MCF 10A (cell line): ENCODE measurements at regions of chr3 and their contacts with region 1.

Region 1: DNA sequence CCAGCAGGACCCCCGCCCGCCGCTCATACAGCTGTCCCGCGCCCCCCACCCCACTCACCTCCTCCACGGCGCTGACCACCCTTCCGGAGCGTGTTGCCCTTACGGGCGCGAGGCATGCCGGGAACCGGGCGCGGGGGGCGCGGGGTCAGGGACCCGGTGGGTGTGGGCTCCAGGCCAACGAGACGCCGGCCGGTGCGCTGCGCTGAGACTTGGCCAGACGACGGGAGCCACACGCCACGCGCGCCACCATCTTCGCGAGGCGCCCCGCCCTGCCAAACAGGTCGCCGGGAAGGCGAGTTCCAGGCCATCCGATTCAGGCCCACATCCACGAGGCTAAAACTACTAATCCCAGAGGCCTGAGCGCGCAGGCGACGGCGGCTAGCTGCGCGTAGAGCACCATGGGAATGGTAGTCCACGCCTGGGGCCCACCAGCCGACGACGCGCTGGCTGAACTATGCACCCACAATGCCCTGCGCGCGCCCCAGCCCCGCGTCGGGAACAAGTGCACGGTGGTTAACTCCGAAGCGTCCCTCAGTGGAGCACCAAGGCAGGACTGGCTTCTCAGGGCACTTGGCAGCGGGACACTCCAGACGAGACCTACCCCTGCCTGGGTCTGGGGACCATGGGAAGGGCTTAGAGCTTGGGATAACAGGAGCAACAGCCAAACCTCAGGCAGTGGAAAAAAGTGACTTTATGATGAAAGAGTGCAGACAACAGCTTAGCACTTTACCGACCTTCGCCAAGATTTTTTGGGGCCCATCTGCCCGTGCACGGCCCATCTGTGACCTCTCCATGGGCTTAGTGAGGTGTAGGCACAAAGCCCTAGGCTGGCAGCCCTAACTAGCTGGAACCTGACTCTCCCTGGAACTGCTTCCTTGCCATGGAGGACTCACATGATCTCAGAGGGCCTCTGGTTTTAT is at the start of gene IFRD2:
- DNase-seq: peak; percentile 97
- H3K4me3 Mint-ChIP-seq: peak within 1 kb of the TSS; percentile 96
- H3K27ac Mint-ChIP-seq: peak within 1 kb of the TSS; percentile 93
- H3K4me1 Mint-ChIP-seq: peaks cover 14% of the 10 kb centered on the region
- H3K27me3 Mint-ChIP-seq: no peaks in the 10 kb centered on the region
- CTCF ChIP-seq: no peak
- total RNA-seq, gene IFRD2: 135 and 182 TPM in 2 replicates

Region 2: DNA sequence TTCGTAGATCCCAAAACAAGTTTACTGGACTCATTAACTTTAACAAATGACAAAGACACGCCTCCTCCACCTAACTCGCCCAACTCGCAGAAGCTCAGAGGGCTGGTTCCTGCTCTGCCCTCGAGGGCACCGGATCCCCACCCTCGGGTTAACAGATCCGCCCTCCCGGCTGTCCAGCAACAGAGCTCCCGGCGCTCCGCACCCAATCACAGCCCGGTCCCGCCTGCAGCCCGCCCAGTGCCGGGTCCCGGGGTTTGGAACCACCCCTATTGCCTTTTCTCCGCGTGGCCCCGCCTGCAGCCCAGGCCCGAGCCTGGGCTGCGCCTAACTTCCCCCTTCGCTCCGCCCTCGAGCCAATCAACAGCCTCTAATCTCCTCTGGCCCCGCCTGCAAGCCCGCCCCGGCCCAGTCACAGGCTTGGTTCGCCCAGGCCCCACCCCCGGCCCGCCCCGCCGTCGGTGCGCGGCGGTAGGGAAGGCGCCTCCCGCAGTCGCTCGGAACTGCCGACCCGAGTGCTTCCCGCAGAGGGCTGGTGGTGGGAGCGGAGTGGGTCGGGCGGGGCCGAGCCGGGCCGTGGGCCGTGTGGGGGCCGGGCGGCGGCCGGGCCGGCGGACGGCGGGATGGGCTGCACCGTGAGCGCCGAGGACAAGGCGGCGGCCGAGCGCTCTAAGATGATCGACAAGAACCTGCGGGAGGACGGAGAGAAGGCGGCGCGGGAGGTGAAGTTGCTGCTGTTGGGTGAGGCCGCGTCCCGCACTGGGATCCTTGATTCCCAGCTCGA is 56.5 kb before region 1 on chr3 and contains the start of gene GNAI2:
- CTCF ChIA-PET with region 1: no interaction called
- POLR2A ChIA-PET with region 1: interaction called, 22 read pairs
- intact Hi-C with region 1: no loop called
- DNase-seq: peak; percentile 99
- H3K4me3 Mint-ChIP-seq: peak within 1 kb of the TSS; percentile 98
- H3K27ac Mint-ChIP-seq: peak within 1 kb of the TSS; percentile 83
- H3K4me1 Mint-ChIP-seq: peaks cover 46% of the 10 kb centered on the region
- H3K27me3 Mint-ChIP-seq: no peaks in the 10 kb centered on the region
- CTCF ChIP-seq: no peak
- total RNA-seq, gene GNAI2: 122 and 123 TPM in 2 replicates

Region 3: DNA sequence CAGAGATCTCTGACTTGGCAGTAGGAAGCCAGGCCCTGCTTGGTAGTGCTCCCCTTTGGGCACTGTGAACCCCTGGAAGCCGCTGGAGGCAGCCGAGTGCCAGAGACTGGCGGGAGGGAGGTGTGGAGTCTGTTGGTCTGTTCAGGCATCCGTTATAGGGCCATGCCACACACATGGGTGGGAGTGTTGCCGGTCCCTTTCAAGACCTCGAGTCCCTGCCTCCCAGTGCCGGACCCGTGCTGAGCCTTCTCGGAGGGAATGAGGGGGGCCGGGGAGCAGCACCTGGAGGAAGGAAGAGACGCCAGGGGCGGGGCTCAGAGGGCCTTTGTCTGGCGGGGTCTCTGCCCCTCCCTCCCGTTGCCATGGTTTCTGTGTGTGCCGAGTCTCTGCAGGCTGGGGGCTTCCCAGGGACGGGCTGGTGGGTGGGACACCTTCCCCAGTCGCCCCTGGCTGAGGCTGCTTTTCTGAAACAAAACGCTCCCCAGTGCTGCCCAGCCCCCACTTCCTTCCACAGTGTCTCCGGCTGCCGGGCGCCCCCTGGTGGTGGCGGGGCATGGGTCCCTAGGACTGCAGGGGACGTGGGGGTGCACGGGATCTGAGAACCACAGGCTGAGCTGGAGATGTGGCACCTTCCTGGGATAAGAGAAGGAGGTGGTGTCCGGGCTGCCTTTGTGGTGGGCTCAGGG is 46.4 kb before region 1 on chr3:
- CTCF ChIA-PET with region 1: interaction called, 4 read pairs
- POLR2A ChIA-PET with region 1: interaction called, 10 read pairs
- intact Hi-C with region 1: no loop called
- DNase-seq: peak; percentile 91
- H3K4me3 Mint-ChIP-seq: peak overlapping the region; percentile 55
- H3K27ac Mint-ChIP-seq: peak overlapping the region; percentile 91
- H3K4me1 Mint-ChIP-seq: peaks cover 54% of the 10 kb centered on the region
- H3K27me3 Mint-ChIP-seq: no peaks in the 10 kb centered on the region
- CTCF ChIP-seq: peak; percentile 98

Region 4: GRCh38 chr3:50278868-50279224 is 13.6 kb before region 1 on chr3 and contains the start of gene LSMEM2:
- CTCF ChIA-PET with region 1: interaction called, 10 read pairs
- POLR2A ChIA-PET with region 1: interaction called, 22 read pairs
- intact Hi-C with region 1: no loop called
- DNase-seq: no peak
- H3K4me3 Mint-ChIP-seq: no peak within 1 kb of the TSS
- H3K27ac Mint-ChIP-seq: no peak within 1 kb of the TSS
- H3K4me1 Mint-ChIP-seq: peaks cover 9% of the 10 kb centered on the region
- H3K27me3 Mint-ChIP-seq: no peaks in the 10 kb centered on the region
- CTCF ChIP-seq: no peak
- total RNA-seq, gene LSMEM2: 0.20 TPM in 1 of 2 replicates, not detected in the other

Region 5: DNA sequence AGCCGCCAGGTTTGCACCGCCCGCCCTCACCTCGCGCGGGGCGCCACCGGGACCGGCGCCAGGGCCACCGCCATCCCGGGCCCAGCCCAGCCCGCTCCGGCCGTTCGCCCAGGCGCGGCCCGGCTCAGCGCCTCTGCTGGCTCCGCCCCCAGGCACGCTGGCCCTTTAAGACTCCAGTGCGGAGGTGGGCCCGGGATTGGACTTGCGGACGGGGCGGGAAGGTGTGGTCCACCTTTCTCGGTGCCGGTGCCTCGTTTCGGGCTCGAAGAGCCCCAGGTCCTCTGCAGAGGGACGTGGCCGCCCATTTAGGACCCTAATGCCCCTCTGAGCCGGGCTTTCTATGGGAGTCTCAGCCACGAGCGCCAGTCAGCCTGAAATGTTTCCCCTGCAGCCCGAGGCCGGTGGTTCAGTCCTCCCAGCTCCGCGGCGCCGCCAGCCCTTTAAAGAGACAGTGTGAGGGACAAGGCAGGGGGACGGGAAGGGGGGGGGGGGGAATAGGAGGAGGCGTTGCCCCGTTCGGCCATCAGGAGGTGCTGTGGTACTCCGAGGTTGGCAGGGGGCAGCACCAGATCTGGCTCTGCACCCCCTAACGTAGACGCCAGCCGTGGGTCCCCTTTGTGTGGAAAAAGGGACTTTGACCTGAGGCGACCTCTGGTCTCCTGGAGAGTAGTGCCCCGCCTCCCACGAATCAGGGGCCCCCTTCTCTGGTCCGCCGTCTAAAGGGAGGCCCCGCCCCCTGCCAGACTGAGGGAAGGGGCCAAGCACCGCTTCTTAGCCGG is 29.1 kb after region 1 on chr3:
- CTCF ChIA-PET with region 1: interaction called, 38 read pairs
- POLR2A ChIA-PET with region 1: interaction called, 22 read pairs
- intact Hi-C with region 1: no loop called
- DNase-seq: peak; percentile 89
- H3K4me3 Mint-ChIP-seq: peak overlapping the region; percentile 80
- H3K27ac Mint-ChIP-seq: peak overlapping the region; percentile 98
- H3K4me1 Mint-ChIP-seq: peaks cover 17% of the 10 kb centered on the region
- H3K27me3 Mint-ChIP-seq: no peaks in the 10 kb centered on the region
- CTCF ChIP-seq: peak; percentile 38

Region 6: DNA sequence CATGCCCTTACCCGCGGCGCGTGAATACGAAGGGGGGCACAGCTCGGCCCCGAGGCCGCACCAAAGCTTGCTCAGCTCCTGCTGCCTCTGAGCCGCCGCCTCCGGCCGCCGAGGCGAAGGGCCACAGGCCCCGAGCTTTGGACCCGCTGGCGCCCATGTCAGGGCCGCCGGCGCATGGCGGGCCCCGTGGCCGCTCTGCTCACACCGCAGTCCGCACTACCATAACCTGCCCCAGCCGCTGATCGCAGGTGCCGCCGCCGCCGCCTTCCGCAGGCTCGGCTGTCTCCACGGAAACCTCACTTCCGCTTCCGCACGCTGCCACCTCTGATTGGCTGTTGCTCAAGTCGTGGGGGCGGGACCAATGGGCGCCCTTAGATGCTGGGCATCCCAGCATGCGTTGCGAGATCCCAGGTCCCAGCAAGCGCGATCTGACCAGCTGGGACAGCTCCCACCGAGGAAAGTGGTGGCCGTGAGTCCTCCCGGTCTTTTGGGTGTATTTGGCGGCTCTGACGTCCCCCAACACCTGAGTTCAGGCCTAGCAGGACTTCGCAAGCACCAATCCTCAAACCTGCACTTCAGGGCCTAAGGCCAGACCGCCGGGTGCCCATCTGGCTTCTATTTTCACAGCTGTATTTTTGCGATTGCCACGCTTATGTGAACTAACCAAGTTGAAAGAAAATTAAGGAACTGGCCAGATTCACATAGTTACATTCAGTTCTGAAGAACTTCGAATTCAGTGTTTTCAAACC is 35.7 kb after region 1 on chr3 and contains the start of gene TUSC2:
- CTCF ChIA-PET with region 1: interaction called, 38 read pairs
- POLR2A ChIA-PET with region 1: interaction called, 22 read pairs
- intact Hi-C with region 1: no loop called
- DNase-seq: peak; percentile 97
- H3K4me3 Mint-ChIP-seq: peak within 1 kb of the TSS; percentile 86
- H3K27ac Mint-ChIP-seq: peak within 1 kb of the TSS; percentile 90
- H3K4me1 Mint-ChIP-seq: no peaks in the 10 kb centered on the region
- H3K27me3 Mint-ChIP-seq: no peaks in the 10 kb centered on the region
- CTCF ChIP-seq: no peak
- total RNA-seq, gene TUSC2: 14.5 and 20.4 TPM in 2 replicates

Region 7: GRCh38 chr3:50337191-50337841 is 44.9 kb after region 1 on chr3:
- CTCF ChIA-PET with region 1: interaction called, 4 read pairs
- POLR2A ChIA-PET with region 1: interaction called, 22 read pairs
- intact Hi-C with region 1: no loop called
- DNase-seq: peak; percentile 99
- H3K4me3 Mint-ChIP-seq: peak overlapping the region; percentile 85
- H3K27ac Mint-ChIP-seq: peak overlapping the region; percentile 91
- H3K4me1 Mint-ChIP-seq: peaks cover 22% of the 10 kb centered on the region
- H3K27me3 Mint-ChIP-seq: no peaks in the 10 kb centered on the region
- CTCF ChIP-seq: no peak